ENCODE measurements at regions of chr11 and their contacts with region 1.

Region 1: GRCh38 chr11:119474682-119475596 is 52.0 kb upstream of the THY1 start:
- DNase-seq: peak; percentile 71 to 80 (median 74)
- ATAC-seq: peak; percentile 89
- H3K4me3 ChIP-seq: no peak overlapping the region
- H3K27ac ChIP-seq: no peak overlapping the region; the same call in 2 of the 3 replicates
- H3K4me1 ChIP-seq: peaks cover 5 to 11% of the 10 kb centered on the region in 2 experiments; a peak in 4 of 5 replicates
- H3K27me3 ChIP-seq: 0 out of 5 replicates have a peak, but pooled peaks cover 0 to 9% of the 10 kb centered on the region in 2 experiments
- CTCF ChIP-seq: peak; percentile 91 to 96 (median 96)
- EP300 ChIP-seq: no peak
- POLR2A ChIP-seq: no peak
- RAD21 ChIP-seq: peak; percentile 90 to 98

Region 2: GRCh38 chr11:119338318-119338907 is 136.5 kb before region 1 on chr11:
- CTCF ChIA-PET with region 1: interaction called, 6 read pairs
- POLR2A ChIA-PET with region 1: interaction called, 6 read pairs
- in situ Hi-C with region 1: no loop called
- intact Hi-C with region 1: loop called (anchors 2 kb)
- DNase-seq: peak; percentile 74 to 89 (median 82)
- ATAC-seq: peak; percentile 73
- H3K4me3 ChIP-seq: no peak overlapping the region
- H3K27ac ChIP-seq: 0 out of 3 replicates have a peak overlapping the region, but pooled peaks have one; percentile 23
- H3K4me1 ChIP-seq: peaks cover 23 to 69% of the 10 kb centered on the region in 2 experiments; a peak in 4 of 5 replicates
- H3K27me3 ChIP-seq: peaks cover 0 to 14% of the 10 kb centered on the region in 2 experiments; a peak in 3 of 5 replicates
- CTCF ChIP-seq: peak; percentile 85 to 93 (median 90)
- EP300 ChIP-seq: no peak
- POLR2A ChIP-seq: no peak
- RAD21 ChIP-seq: peak; percentile 65 to 69

Region 3: DNA sequence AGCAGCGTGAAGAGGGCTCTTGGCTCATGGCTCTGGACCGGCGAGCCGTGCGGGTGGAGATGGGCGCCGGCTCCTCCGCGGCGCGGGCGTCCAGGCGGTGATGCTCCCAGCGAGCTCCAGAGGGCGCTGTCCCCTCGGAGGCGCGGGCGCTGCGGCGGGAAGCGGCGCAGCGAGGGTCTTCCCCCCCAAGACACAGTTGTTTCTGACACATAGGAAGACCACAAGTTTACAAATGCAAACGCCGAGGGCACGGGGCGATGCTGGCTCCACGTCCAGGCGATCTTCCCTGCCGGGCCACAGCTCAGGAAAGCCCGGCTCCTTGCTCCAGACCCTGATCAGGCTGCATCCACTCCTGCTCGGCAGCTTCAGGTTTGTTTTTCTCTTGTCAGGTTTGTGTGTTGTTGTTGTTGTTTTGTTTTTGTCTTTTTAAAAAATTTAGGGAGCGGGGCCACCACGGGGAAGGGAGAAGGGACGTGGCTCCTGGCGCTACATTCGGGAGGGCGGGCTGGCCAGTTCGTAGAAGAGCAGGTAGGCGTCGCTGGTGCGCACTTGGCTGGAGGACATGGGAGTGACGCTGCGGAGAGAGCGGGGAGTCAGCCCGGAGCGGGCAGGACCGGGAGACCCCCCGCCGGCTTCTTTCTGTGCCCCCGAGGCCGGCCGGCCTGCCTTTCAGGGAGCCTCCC is 118.4 kb before region 1 on chr11:
- CTCF ChIA-PET with region 1: interaction called, 51 read pairs
- POLR2A ChIA-PET with region 1: no interaction called
- in situ Hi-C with region 1: loop called (anchors 5 kb)
- intact Hi-C with region 1: loop called (anchors 1 kb)
- DNase-seq: peak; percentile 79 to 90 (median 86)
- ATAC-seq: peak; percentile 95
- H3K4me3 ChIP-seq: peak overlapping the region; percentile 40
- H3K27ac ChIP-seq: peak overlapping the region; percentile 77
- H3K4me1 ChIP-seq: peaks cover 12 to 18% of the 10 kb centered on the region in 2 experiments; a peak in 4 of 5 replicates
- H3K27me3 ChIP-seq: no peaks in the 10 kb centered on the region
- CTCF ChIP-seq: peak; percentile 88 to 97 (median 92)
- EP300 ChIP-seq: peak; percentile 29; the same call in 1 of the 2 replicates
- POLR2A ChIP-seq: no peak
- RAD21 ChIP-seq: peak; percentile 89 to 90

Region 4: GRCh38 chr11:119381181-119381988 is 93.6 kb before region 1 on chr11 and contains the start of gene USP2:
- CTCF ChIA-PET with region 1: interaction called, 4 read pairs
- POLR2A ChIA-PET with region 1: interaction called, 3 read pairs
- in situ Hi-C with region 1: no loop called
- intact Hi-C with region 1: loop called (anchors 1 kb)
- DNase-seq: peak; percentile 95 to 97 (median 96)
- ATAC-seq: peak; percentile 88
- H3K4me3 ChIP-seq: peak within 1 kb of the TSS; percentile 61
- H3K27ac ChIP-seq: peak within 1 kb of the TSS; percentile 67
- H3K4me1 ChIP-seq: peaks cover 43 to 47% of the 10 kb centered on the region in 2 experiments
- H3K27me3 ChIP-seq: no peaks in the 10 kb centered on the region
- CTCF ChIP-seq: peak; percentile 93 to 96 (median 94)
- EP300 ChIP-seq: peak; percentile 24; the same call in 1 of the 2 replicates
- POLR2A ChIP-seq: 0 out of 2 replicates have a peak, but pooled peaks have one; percentile 40
- RAD21 ChIP-seq: peak; percentile 87 to 89
- polyA plus RNA-seq, gene USP2: 3.4 to 5.8 TPM

Region 5: GRCh38 chr11:119427279-119427678 is 47.7 kb before region 1 on chr11:
- CTCF ChIA-PET with region 1: no interaction called
- POLR2A ChIA-PET with region 1: no interaction called
- in situ Hi-C with region 1: no loop called
- intact Hi-C with region 1: loop called (anchors 5 kb)
- DNase-seq: peak; percentile 57 to 71 (median 62)
- ATAC-seq: peak; percentile 89
- H3K4me3 ChIP-seq: no peak overlapping the region
- H3K27ac ChIP-seq: no peak overlapping the region; the same call in 2 of the 3 replicates
- H3K4me1 ChIP-seq: peaks cover 5 to 23% of the 10 kb centered on the region in 2 experiments; a peak in 3 of 5 replicates
- H3K27me3 ChIP-seq: peaks cover 0 to 5% of the 10 kb centered on the region in 2 experiments; a peak in 1 of 5 replicates
- CTCF ChIP-seq: no peak
- EP300 ChIP-seq: no peak
- POLR2A ChIP-seq: no peak
- RAD21 ChIP-seq: no peak

Region 6: GRCh38 chr11:119942583-119943297 is 467.8 kb after region 1 on chr11:
- CTCF ChIA-PET with region 1: no interaction called
- POLR2A ChIA-PET with region 1: no interaction called
- in situ Hi-C with region 1: no loop called
- intact Hi-C with region 1: no loop called
- DNase-seq: peak in 1 of 4 experiments; percentile 2
- ATAC-seq: no peak
- H3K4me3 ChIP-seq: no peak overlapping the region
- H3K27ac ChIP-seq: no peak overlapping the region
- H3K4me1 ChIP-seq: no peaks in the 10 kb centered on the region; a peak in 1 of 5 replicates
- H3K27me3 ChIP-seq: peaks cover 0 to 4% of the 10 kb centered on the region in 2 experiments; a peak in 1 of 5 replicates
- CTCF ChIP-seq: no peak
- EP300 ChIP-seq: no peak
- POLR2A ChIP-seq: no peak
- RAD21 ChIP-seq: no peak